ENCODE measurements at regions of chr16 and their contacts with region 1.

Region 1: GRCh38 chr16:82456683-82457082 is 170.1 kb upstream of the CDH13 start:
- DNase-seq: peak; percentile 69
- H3K4me3 ChIP-seq: no peak overlapping the region; a peak in 1 of 4 replicates
- H3K27ac ChIP-seq: no peak overlapping the region
- H3K4me1 ChIP-seq: no peaks in the 10 kb centered on the region
- H3K27me3 ChIP-seq: peaks cover 19% of the 10 kb centered on the region; the same call in 1 of the 2 replicates
- CTCF ChIP-seq: peak; percentile 76
- EP300 ChIP-seq: no peak
- RAD21 ChIP-seq: peak; percentile 71

Region 2: DNA sequence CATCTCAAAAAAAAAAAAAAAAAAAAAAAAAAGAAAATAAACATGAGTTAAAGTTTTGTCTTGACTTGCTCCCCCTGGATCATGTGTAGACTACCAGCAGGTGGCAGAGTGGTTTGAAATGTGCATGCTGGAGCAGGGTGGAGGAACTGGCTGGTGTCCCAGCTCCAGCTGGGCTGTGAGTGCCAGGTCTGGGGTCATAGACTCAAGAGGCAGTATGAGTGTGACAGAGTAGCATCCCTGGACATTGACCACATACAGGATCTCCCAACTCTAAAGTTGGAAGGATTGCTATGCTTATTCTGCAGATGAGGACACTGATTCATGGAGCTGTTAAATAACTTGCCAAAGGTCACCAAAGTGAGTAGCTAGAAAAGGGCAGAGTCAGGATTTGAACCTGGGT is 88.6 kb before region 1 on chr16:
- CTCF ChIA-PET with region 1: interaction called, 53 read pairs
- POLR2A ChIA-PET with region 1: no interaction called
- DNase-seq: peak; percentile 61
- H3K4me3 ChIP-seq: no peak overlapping the region
- H3K27ac ChIP-seq: no peak overlapping the region
- H3K4me1 ChIP-seq: no peaks in the 10 kb centered on the region
- H3K27me3 ChIP-seq: no peaks in the 10 kb centered on the region
- CTCF ChIP-seq: peak; percentile 39
- EP300 ChIP-seq: no peak
- RAD21 ChIP-seq: peak; percentile 64

Region 3: DNA sequence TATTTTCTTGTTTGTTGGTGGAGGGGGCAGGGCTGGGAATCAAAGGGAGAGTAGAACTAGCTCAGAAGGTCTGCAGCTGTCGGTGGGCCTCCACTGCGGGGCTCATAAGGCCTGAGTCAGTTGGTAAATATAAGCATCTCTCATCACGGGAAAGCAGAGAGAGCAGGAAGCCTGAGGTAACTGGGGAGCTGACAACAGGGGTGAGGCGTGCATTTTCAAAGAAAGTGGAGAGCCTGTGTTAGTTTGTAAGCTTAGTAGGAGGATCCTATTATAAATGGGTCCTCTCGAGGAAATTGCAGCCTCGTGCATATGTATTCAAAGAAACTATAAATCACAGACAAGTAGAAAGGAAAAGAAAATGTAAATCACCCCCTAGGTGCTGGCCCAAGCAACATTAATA is 50.9 kb before region 1 on chr16:
- CTCF ChIA-PET with region 1: interaction called, 11 read pairs
- POLR2A ChIA-PET with region 1: no interaction called
- DNase-seq: no peak
- H3K4me3 ChIP-seq: no peak overlapping the region
- H3K27ac ChIP-seq: no peak overlapping the region
- H3K4me1 ChIP-seq: no peaks in the 10 kb centered on the region
- H3K27me3 ChIP-seq: peaks cover 5% of the 10 kb centered on the region; the same call in 1 of the 2 replicates
- CTCF ChIP-seq: no peak
- EP300 ChIP-seq: no peak
- RAD21 ChIP-seq: no peak

Region 4: DNA sequence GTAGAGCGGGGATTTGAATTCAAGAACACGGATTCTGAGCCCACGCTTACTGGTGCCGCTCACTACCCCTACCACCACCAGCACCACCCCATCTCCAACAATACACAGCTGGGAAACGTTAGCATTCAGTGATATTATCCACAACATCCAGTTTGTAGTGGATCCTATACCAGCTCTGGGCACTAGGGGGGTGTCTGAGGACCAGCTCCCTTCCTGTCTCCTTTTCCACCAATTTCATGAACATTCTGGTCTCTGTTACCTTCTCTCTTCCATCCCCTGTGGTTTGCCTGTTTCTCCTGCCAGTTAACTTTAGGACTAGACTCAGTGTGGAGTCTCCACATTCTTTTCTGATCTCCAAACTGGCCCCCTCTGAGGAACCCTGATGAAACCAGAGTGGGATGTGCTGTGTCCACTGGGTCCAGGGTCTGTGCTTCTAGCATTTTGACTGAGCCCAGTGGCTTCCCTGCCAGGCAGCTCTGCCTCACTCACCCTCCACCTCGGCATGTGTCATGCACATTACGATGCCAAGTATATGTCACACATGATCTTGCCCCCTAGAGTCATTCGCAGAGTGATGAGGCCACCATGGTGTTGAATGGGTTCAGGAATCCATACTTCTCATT is 16.9 kb before region 1 on chr16:
- CTCF ChIA-PET with region 1: interaction called, 17 read pairs
- POLR2A ChIA-PET with region 1: no interaction called
- DNase-seq: peak; percentile 60
- H3K4me3 ChIP-seq: no peak overlapping the region
- H3K27ac ChIP-seq: no peak overlapping the region
- H3K4me1 ChIP-seq: no peaks in the 10 kb centered on the region
- H3K27me3 ChIP-seq: no peaks in the 10 kb centered on the region
- CTCF ChIP-seq: peak; percentile 45
- EP300 ChIP-seq: no peak
- RAD21 ChIP-seq: no peak

Region 5: DNA sequence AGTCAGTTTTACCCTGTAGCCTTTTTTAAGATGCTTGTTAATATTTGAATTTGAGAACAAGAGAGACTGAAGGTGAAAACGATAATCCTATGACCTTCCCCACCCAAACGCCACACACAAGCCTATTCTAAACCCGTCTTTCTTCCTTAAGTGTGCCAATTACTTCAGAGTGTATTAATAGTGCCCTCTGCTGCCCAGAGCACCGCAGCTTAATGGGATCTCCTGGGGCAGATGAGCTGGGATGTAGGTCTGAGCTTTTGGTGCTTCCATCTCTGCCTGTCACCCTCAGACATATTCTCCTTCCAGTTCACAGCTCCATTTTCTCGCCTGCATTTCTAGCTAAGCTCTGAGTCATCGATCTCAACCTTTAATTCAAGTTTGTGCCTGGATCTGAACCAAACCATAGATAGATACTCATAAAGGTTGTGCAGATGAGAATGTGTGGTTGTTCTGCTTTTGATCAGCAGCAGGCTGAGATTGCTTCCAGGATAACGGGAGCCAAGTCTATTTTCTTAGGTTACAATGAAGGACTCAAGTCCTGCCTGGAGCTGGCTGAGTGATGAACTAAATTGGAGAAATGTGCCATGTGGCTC is 123.7 kb after region 1 on chr16:
- CTCF ChIA-PET with region 1: no interaction called
- POLR2A ChIA-PET with region 1: no interaction called
- DNase-seq: peak; percentile 22
- H3K4me3 ChIP-seq: no peak overlapping the region
- H3K27ac ChIP-seq: no peak overlapping the region
- H3K4me1 ChIP-seq: no peaks in the 10 kb centered on the region
- H3K27me3 ChIP-seq: no peaks in the 10 kb centered on the region
- CTCF ChIP-seq: peak; percentile 45
- EP300 ChIP-seq: no peak
- RAD21 ChIP-seq: peak; percentile 64